ENCODE measurements at regions of chr16 and their contacts with region 1.

Region 1: DNA sequence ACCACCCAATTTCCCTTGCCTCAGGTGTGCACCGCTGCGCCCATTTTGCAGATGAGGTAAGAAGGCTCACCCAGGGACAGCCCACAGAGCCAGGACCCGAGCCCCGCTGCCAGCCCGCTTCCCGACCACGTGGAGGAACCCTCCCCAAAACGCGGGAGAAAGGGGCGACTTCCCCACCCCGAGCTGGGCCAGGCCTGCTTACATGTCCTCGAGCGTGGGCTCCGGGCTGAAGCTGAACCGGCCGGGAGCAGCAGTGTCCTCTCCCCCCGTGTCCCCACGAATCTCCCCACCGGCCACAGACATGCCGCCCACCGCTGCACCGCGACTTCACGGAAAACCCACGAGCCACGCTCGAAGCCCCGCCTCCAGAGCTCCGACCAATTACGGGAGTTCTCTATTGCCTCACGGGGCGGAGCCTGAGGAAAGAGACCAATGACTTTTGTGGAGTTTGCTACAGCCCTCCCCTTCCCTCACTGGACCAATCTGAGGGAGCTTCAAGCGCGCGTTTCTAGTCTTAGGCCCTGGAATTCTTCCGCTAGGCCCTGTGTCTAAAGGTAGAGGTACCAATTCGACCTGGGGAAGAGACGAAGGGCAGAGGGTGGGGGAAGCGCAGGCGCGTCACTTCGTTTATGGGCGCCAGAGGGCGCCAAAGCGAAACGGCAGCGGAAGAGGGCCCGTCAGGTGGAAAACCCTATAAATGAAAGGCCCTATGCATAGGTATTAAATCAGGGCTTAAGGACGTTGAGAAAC is at the start of gene DCTPP1:
- DNase-seq: peak; percentile 86
- ATAC-seq: peak; percentile 97
- H3K4me3 Mint-ChIP-seq: no peak within 1 kb of the TSS
- H3K27ac Mint-ChIP-seq: no peak within 1 kb of the TSS
- H3K4me1 Mint-ChIP-seq: peaks cover 2% of the 10 kb centered on the region
- H3K27me3 Mint-ChIP-seq: no peaks in the 10 kb centered on the region
- CTCF ChIP-seq: no peak
- total RNA-seq, gene DCTPP1: 66.7 and 81.5 TPM in 2 replicates

Region 2: DNA sequence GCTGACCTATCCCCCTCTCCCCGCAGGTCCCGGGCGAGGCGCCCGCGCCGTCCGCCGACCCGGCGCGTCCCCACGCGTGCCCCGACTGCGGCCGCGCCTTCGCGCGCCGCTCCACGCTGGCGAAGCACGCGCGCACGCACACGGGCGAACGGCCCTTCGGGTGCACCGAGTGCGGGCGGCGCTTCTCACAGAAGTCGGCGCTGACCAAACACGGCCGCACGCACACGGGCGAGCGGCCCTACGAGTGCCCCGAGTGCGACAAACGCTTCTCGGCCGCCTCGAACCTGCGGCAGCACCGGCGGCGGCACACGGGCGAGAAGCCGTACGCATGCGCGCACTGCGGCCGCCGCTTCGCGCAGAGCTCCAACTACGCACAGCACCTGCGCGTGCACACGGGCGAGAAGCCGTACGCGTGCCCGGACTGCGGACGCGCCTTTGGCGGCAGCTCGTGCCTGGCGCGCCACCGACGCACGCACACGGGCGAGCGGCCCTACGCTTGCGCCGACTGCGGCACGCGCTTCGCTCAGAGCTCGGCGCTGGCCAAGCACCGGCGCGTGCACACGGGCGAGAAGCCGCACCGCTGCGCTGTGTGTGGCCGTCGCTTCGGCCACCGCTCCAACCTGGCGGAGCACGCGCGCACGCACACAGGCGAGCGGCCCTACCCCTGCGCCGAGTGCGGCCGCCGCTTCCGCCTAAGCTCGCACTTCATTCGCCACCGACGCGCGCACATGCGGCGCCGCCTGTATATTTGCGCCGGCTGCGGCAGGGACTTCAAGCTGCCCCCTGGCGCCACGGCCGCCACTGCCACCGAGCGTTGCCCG is 12.1 kb before region 1 on chr16:
- CTCF ChIA-PET with region 1: interaction called, 19 read pairs
- POLR2A ChIA-PET with region 1: interaction called, 51 read pairs
- intact Hi-C with region 1: loop called (anchors 1 kb)
- DNase-seq: peak; percentile 84
- ATAC-seq: peak; percentile 86
- H3K4me3 Mint-ChIP-seq: peak overlapping the region; percentile 71
- H3K27ac Mint-ChIP-seq: peak overlapping the region; percentile 69
- H3K4me1 Mint-ChIP-seq: peaks cover 12% of the 10 kb centered on the region
- H3K27me3 Mint-ChIP-seq: no peaks in the 10 kb centered on the region
- CTCF ChIP-seq: no peak

Region 3: DNA sequence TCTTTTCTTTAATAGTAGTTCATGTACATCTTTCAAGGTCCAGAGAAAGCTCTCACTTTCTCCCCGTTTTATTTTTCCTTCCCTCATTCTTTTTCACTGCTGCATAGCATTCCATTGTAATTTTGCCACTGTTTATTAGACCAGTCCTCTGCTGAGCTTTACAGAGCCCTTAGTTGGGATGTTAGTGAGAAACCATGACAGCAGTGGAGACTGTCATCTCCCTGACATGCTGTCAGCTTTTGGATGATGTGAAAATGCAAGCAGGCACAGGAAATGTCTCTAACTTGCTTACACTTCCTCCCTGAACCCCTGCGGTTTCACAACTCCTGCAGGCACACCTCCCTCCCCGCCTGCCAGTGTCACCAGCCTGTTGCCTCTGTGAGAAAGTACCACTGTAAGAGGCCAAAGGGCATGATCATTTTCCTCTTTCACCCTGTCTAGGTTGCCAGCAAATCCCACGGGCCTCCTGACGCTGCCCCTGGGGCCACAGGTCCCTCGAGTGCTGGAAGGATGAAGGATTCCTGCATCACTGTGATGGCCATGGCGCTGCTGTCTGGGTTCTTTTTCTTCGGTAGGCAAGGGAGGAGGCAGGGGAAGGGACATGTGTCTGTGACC is 42.6 kb after region 1 on chr16 and contains the start of gene ITGAL:
- CTCF ChIA-PET with region 1: interaction called, 6 read pairs
- POLR2A ChIA-PET with region 1: interaction called, 38 read pairs
- intact Hi-C with region 1: loop called (anchors 1 kb)
- DNase-seq: peak; percentile 59
- ATAC-seq: peak; percentile 65
- H3K4me3 Mint-ChIP-seq: peak within 1 kb of the TSS; percentile 89
- H3K27ac Mint-ChIP-seq: peak within 1 kb of the TSS; percentile 94
- H3K4me1 Mint-ChIP-seq: peaks cover 60% of the 10 kb centered on the region
- H3K27me3 Mint-ChIP-seq: no peaks in the 10 kb centered on the region
- CTCF ChIP-seq: no peak
- total RNA-seq, gene ITGAL: 216 and 240 TPM in 2 replicates

Region 4: GRCh38 chr16:30526823-30527635 is 97.2 kb after region 1 on chr16:
- CTCF ChIA-PET with region 1: interaction called, 9 read pairs
- POLR2A ChIA-PET with region 1: interaction called, 32 read pairs
- intact Hi-C with region 1: loop called (anchors 1 kb)
- DNase-seq: peak; percentile 93
- ATAC-seq: peak; percentile 84
- H3K4me3 Mint-ChIP-seq: peak overlapping the region; percentile 89
- H3K27ac Mint-ChIP-seq: peak overlapping the region; percentile 99
- H3K4me1 Mint-ChIP-seq: peaks cover 21% of the 10 kb centered on the region
- H3K27me3 Mint-ChIP-seq: no peaks in the 10 kb centered on the region
- CTCF ChIP-seq: no peak

Region 5: DNA sequence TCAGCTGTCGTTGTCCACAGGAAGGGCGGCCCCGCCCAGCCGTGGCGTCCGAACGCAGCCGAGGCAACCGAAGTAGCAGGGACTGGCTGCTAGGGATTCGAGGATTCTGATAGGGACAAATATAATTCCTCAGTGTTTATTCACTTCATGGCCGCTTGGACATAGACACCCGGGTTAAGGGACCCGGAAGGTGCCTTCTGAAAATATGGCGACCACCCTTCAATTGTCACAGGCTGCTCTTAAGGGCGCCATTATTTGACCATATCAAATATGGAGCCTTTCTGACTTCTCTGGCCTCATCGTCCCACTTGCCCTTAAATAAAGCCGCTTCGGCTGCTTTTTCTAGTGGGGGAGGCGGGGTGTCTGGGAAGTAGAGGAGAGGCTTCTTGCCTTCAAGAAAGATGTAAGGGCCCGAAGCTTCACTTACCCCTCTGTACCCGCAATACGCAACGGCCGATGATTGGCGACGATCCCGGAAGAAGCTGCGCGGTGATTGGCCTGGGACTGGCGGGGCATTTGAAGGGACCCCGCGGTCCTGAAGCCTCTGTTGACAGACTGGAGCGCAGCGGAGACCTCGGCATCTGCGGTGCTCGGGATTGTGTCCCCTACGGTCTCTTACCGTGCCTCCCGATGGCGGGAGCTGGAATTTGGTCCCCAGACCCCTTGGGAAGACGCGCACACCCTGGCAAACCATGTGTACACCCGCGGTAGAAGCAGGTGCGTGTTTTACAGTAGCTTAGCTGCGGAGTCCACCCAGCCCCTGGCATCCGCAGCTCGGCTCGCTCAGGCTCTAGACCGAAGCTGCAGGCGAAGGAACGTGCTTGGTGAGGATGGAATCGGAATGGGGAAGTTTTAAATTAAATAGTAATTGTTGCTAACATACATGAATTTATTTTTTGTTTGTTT is 142.1 kb after region 1 on chr16 and contains the start of gene ZNF688:
- CTCF ChIA-PET with region 1: interaction called, 13 read pairs
- POLR2A ChIA-PET with region 1: interaction called, 27 read pairs
- intact Hi-C with region 1: loop called (anchors 1 kb)
- DNase-seq: peak; percentile 78
- ATAC-seq: peak; percentile 86
- H3K4me3 Mint-ChIP-seq: peak within 1 kb of the TSS; percentile 89
- H3K27ac Mint-ChIP-seq: peak within 1 kb of the TSS; percentile 96
- H3K4me1 Mint-ChIP-seq: peaks cover 41% of the 10 kb centered on the region
- H3K27me3 Mint-ChIP-seq: no peaks in the 10 kb centered on the region
- CTCF ChIP-seq: no peak
- total RNA-seq, gene ZNF688: 13.9 and 14.7 TPM in 2 replicates

Region 6: GRCh38 chr16:30615358-30616091 is 185.7 kb after region 1 on chr16:
- CTCF ChIA-PET with region 1: interaction called, 6 read pairs
- POLR2A ChIA-PET with region 1: interaction called, 5 read pairs
- intact Hi-C with region 1: loop called (anchors 1 kb)
- DNase-seq: peak; percentile 44
- ATAC-seq: peak; percentile 85
- H3K4me3 Mint-ChIP-seq: no peak overlapping the region
- H3K27ac Mint-ChIP-seq: no peak overlapping the region
- H3K4me1 Mint-ChIP-seq: peaks cover 8% of the 10 kb centered on the region
- H3K27me3 Mint-ChIP-seq: no peaks in the 10 kb centered on the region
- CTCF ChIP-seq: no peak

Region 7: GRCh38 chr16:30650369-30651123 is 220.7 kb after region 1 on chr16 and contains the start of gene PRR14:
- CTCF ChIA-PET with region 1: no interaction called
- POLR2A ChIA-PET with region 1: interaction called, 6 read pairs
- intact Hi-C with region 1: loop called (anchors 1 kb)
- DNase-seq: peak; percentile 90
- ATAC-seq: peak; percentile 72
- H3K4me3 Mint-ChIP-seq: peak within 1 kb of the TSS; percentile 96
- H3K27ac Mint-ChIP-seq: peak within 1 kb of the TSS; percentile 95
- H3K4me1 Mint-ChIP-seq: peaks cover 24% of the 10 kb centered on the region
- H3K27me3 Mint-ChIP-seq: no peaks in the 10 kb centered on the region
- CTCF ChIP-seq: no peak
- total RNA-seq, gene PRR14: 63.5 and 77.9 TPM in 2 replicates